Right ventricle myocardium inferior (tissue), 1 donor: ENCODE measurements at regions of chr7 and their contacts with region 1.

Region 1: DNA sequence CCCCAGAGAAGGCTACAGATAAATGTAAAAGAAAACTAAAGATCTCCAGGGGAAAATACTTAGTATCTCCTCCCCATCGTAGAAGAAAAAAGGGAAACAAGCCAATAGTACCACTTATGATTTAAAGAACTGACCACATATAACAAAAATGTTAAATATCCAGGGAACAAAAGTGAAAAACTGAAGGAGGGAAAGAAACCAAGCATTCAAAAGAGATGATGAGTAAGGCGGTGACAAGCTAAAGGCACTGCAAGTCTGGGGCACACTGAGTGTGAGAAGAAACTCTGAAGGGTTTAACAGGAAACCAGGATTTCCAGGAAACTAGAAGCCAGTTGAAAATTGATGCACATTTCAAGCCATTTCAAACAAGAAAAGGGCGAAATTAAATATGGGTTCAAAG is 226.3 kb downstream of the AHR start:
- DNase-seq: no peak
- ATAC-seq: no peak

Region 2: DNA sequence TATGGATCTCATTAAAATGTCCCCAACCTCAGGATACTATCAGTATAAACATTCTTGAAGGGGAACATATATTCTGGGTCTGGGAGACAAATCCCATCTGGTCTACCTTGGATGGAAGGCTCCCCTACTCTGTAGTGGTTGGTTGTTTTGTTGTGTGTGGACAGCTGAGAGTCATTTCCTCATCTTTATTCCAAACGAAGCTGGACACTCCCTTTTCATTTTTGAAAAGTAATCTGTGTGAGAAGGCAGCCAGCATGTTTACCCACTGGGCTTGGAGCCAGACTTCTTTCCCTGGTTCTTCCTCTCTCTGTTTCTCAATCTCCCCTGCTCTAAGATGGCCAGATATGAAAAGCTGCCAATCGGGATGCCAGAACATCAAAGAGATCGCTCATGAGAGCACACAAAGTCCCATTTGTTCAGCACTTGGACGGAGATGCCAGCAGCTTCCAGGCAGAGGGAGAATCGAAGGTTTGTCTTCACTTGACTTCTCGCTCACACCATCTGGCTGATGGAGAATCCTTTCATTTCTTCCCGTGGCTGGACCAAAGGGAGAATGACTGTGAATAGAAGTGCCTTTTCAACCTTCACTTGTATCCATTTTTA is 534.8 kb before region 1 on chr7:
- intact Hi-C with region 1: loop called (anchors 5 kb)
- DNase-seq: peak; percentile 60
- ATAC-seq: peak; percentile 92

Region 3: DNA sequence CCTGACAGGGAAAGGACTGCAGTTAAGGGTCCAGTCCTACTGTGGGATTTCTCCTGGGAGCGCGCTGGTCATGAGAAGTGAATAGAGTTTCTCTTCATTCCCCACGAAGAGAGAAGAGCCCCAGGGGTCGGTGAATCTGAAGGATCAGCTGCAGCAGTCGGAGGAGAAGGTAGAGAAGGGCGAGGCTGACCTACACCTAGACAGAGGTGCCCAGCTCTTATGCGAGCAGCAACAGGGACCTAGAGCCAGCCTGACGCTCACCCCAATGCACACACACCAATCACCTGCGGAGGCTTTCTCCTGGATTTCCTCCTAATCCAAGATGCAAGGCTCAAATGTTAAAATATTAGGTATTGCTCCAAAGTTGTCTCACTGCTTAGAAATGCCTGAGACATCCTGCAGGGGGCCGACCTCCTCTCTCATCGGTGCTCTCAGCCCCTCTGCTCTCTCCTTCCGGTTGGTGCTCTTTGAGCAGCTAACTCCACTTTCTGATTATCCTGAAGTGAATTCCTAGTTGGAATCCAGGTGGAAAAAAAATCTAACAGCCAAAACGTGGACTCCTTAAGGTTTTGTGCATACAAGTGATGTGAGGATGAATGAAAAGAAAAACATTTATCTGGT is 49.9 kb before region 1 on chr7:
- intact Hi-C with region 1: no loop called
- DNase-seq: no peak
- ATAC-seq: no peak